T-cell (primary cell): ENCODE measurements at regions of chr18 and their contacts with region 1.

Region 1: GRCh38 chr18:28576941-28577340 is 400.0 kb upstream of the CDH2 start:
- DNase-seq: no peak
- ATAC-seq: no peak
- H3K4me3 ChIP-seq: no peak overlapping the region
- H3K4me3 Mint-ChIP-seq: no peak overlapping the region
- H3K27ac ChIP-seq: no peak overlapping the region
- H3K27ac Mint-ChIP-seq: no peak overlapping the region
- H3K4me1 ChIP-seq: no peaks in the 10 kb centered on the region
- H3K4me1 Mint-ChIP-seq: no peaks in the 10 kb centered on the region
- H3K27me3 ChIP-seq: no peaks in the 10 kb centered on the region
- H3K27me3 Mint-ChIP-seq: no peaks in the 10 kb centered on the region

Region 2: DNA sequence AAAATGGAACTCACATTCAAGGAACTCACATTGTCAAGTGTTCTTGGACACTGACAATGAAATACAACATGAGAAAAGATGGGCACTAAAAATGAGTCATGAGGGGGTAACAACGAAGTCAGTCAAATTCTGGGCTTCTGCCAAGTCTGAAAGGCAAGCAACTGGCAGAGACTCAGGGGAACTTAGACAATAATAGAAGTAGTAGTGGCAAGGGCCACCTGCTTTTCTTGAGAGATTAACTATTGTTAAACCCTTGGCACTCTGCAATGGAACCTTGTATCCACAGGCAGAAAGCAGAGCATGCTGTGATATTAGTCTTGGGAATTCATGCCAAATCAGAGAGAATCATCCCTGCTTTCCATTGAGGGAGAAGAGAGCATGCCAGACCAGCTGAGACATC is 17.4 kb before region 1 on chr18:
- CTCF ChIA-PET with region 1: no interaction called
- POLR2A ChIA-PET with region 1: interaction called in 1 of 2 experiments, 10 read pairs
- DNase-seq: no peak
- ATAC-seq: no peak
- H3K4me3 ChIP-seq: no peak overlapping the region
- H3K4me3 Mint-ChIP-seq: no peak overlapping the region
- H3K27ac ChIP-seq: no peak overlapping the region
- H3K27ac Mint-ChIP-seq: no peak overlapping the region
- H3K4me1 ChIP-seq: no peaks in the 10 kb centered on the region
- H3K4me1 Mint-ChIP-seq: no peaks in the 10 kb centered on the region
- H3K27me3 ChIP-seq: no peaks in the 10 kb centered on the region
- H3K27me3 Mint-ChIP-seq: no peaks in the 10 kb centered on the region